Stomach (tissue), 19 donors: ENCODE measurements at regions of chr10 and their contacts with region 1.

Region 1: DNA sequence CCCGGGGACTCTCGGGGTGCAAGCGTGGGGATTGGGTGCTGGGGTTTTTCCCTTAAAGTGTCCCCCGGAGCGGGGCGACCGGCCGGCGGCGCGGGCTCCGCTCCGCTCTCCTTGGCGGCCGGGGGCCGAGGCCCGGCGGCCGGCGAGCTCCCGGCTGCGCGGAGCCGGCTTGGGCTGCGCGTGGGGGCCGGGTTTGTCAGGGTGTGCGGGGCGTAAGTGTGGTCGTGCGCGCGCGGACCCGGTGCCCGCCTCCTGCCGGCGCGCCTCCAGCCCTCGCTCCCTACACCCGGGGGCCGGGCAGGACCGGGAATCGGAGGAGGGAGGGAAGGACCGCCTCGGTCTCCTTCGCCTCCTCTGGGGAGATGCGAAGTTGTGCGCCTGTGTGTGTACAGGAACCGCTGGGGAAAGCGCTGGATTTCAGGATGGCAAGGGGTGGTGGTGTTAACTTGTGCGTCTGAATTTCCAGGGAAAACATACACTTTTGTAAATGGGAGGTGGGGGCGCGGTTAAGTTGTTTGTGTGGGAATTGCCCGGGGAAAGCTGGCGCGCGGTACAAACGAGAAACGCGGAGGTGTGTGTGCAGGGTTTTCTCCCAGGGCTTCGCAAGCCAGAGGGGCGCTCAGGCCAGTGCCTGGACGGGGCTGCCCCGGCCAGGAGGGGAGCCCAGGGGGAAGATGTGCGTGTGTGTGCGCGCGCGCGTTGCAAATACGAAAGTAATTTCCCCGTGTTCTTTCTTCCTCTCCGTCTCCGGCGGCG is 737 bp downstream of the ZMIZ1 start:
- DNase-seq: peak; percentile 61 to 81
- H3K4me3 ChIP-seq: peak overlapping the region; percentile 80 to 93 (median 90)
- H3K27ac ChIP-seq: peak overlapping the region; percentile 95 to 99 (median 98)
- H3K4me1 ChIP-seq: peaks cover 46 to 71% (median 65%) of the 10 kb centered on the region in 4 donors
- H3K27me3 ChIP-seq: no peaks in the 10 kb centered on the region
- CTCF ChIP-seq: no peak
- EP300 ChIP-seq: no peak
- POLR2A ChIP-seq: no peak

Region 2: DNA sequence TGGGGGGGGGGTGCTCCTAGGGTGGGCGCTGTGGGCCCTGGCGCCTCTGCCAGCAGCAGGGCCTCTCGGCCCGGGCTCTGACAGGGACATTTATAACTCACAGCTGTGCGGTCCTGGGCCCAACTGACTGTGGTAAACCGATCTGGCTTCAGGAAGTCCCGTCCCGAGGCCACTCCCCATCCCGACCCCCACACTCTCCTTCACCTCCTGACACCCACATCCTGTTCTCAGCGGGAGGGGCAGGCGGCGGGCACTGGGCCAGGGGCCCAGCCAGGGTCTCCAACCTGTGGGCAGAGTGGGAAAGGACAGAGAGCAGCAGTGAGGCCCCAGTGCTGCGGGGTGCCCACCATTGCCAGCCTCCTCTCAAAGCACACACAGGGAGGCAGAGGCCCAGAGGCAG is 68.3 kb after region 1 on chr10:
- intact Hi-C with region 1: loop called (anchors 10 kb)
- DNase-seq: peak in 1 of 2 donors; percentile 77
- H3K4me3 ChIP-seq: no peak overlapping the region
- H3K27ac ChIP-seq: peak overlapping the region; percentile 46 to 91 (median 79)
- H3K4me1 ChIP-seq: peaks cover 75 to 100% (median 87%) of the 10 kb centered on the region in 4 donors
- H3K27me3 ChIP-seq: no peaks in the 10 kb centered on the region
- CTCF ChIP-seq: no peak
- EP300 ChIP-seq: no peak
- POLR2A ChIP-seq: no peak

Region 3: DNA sequence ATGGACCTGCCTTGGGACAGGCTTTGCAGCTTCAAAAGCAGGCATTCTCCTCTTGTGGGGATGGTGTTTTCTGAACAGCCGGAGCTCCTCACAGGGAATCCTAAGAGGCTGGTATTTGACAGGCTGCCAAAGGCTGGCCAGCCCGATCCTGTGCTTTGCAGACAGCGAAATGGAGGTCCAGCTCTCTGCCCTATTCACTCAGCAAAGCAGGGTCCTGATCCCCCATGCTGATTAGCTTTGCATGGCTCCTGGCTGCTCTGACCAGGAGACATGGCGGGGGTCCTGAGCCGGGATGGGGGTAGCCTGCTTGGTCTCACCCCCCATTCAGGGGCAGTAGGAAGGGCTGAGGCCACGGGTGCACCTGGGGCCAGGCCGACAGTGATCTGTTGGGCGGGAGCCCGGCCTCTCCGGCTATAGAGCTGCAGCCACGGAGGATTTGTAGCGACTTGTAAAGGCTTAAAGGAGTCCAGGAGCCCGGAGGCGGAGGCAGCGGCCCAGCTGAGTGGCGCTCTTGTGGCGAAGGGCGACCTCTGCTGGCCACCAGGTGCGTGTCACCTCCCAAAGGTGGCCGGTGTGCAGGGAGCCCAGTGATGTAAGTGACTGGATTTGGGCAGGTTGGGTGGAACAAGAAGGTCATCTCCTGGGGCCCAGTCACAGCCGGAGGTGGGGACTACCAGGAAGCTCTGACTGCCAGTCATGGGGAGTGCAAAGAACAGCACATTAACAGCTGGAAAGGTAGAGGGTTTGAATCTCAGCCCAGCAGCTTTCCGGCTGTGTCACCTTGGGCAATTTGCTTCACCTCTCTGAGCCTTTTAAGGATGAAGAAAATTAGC is 125.8 kb after region 1 on chr10:
- intact Hi-C with region 1: loop called (anchors 10 kb)
- DNase-seq: peak; percentile 92 to 95
- H3K4me3 ChIP-seq: peak overlapping the region in 1 of 4 donors; percentile 13
- H3K27ac ChIP-seq: peak overlapping the region; percentile 8 to 76 (median 69)
- H3K4me1 ChIP-seq: peaks cover 17 to 62% (median 39%) of the 10 kb centered on the region in 4 donors
- H3K27me3 ChIP-seq: no peaks in the 10 kb centered on the region
- CTCF ChIP-seq: peak in 6 of 7 experiments; percentile 77 to 95 (median 92)
- EP300 ChIP-seq: no peak
- POLR2A ChIP-seq: no peak